ENCODE measurements at regions of chr13 and their contacts with region 1.

Region 1: DNA sequence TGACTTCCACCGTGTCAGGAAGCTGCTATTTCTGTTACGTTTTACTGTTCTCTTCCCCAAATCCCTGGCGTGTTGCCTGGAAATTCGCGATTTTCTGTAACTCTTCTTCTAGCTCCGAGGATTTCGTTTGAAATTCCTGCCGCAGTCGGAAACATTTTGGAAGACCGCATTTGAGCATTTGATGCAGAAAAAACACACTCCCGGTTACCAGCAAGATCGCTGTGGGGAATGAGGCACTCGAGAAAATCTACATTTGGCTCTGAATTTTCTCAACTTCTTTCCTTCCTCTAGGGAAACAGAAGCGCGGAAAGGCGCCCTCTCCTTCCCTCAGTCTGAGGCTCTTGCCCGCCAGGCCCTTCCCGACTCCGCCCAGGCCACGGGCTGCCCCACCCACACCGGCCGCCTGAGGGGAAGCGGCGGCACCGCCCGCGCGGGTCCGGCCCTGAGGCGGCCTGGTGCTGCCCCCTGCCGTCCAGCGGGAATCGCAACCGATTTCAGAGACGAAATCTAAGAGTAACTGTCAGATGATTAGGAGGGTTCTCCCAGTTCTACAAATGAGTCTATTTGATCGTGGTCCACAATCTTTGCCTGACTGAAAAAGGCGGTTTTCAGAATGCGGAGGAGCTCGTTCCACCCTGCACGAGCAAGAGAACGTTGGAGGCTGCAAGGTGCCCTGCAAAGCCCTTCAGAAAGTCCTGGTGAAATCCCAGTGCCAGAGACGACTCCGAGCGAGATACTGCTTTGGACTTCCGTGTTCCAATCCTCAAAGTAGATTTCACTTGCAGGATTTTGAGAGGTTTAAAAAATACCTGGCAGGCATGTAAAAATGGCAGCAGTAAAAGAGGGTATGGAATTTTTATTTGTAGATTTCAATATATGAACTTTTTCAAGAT is 18.4 kb upstream of the TUBGCP3 start:
- DNase-seq: peak; percentile 74
- H3K4me3 ChIP-seq: no peak overlapping the region
- H3K27ac ChIP-seq: no peak overlapping the region
- H3K4me1 ChIP-seq: peaks cover 3% of the 10 kb centered on the region
- CTCF ChIP-seq: peak; percentile 79

Region 2: DNA sequence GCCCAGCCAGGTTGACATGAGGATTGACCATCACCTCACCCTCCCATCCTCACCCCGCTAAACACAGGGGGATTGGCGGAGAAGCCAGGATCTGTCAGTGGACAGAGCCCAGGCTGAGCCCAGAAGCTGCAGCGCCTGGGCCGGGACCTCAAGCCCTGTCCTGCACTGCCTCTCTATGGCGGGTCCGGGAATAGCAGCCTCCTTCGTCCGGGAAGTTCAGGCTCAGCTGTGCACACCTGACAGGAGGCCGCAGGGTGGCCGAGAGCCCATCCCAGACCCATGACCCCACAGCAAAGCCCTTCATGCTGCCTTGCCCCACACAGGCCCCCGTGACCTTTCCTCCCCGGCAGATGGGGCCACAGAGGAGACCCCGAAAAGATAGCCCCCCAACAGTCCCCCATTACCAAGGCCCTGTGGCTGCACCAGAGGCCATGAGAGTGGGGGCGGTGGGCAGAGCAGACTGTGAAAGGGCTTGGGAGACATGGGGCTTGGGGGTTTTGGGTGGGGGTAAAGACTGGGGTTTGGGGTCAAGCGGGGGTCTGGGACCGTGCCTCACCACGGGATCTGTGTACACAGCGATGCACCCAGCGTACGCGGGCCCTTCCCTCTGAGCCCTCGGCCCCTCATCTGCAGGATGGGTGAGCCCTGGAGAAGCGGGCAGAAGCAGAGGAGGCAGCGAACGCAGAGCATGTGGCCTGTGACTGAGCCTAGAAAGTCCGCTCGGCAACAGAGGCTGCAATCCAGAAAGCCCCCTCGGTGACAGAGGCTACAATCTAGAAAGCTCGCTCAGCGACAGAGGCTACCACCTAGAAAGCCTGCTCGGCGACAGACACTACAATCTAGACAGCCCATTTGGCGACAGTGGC is 162.1 kb before region 1 on chr13:
- CTCF ChIA-PET with region 1: no interaction called
- POLR2A ChIA-PET with region 1: no interaction called
- intact Hi-C with region 1: loop called (anchors 1 kb)
- DNase-seq: peak; percentile 25
- H3K4me3 ChIP-seq: no peak overlapping the region
- H3K27ac ChIP-seq: no peak overlapping the region
- H3K4me1 ChIP-seq: no peaks in the 10 kb centered on the region
- CTCF ChIP-seq: peak; percentile 74

Region 3: DNA sequence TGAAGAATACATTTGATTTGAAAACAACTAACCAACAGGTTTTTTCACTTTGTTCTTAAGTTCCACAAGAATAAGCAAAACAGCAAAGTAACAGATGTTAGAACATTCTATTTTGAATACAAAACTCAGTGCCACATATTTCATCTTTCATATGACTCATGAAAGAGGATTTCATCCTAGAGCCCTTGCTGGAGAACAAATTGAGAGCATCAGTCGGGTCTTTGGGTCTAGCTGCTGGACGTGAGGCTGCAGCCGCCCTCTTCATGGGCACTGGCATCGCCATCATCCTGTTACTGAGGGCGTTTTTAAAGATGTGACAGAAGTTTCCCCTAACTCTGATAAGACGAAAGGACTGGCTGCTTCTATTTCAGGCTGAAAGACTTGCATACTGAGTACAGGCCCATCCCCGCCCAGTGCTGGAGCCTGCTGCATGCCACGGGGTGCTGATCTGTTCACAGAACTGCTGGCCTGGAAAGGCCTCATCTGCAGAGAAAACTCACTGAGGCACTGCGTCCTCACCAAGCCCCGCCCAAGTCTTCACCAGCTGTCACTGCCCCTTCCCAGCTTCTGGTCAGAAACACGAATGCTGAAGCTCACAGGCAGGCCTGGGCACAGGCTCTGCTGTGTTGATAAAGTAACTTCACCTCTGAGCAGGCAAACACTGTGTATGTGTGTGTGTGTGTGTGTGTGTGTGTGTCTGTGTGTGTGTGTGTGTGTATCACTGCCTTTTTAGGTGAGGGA is 119.8 kb before region 1 on chr13:
- CTCF ChIA-PET with region 1: no interaction called
- POLR2A ChIA-PET with region 1: no interaction called
- intact Hi-C with region 1: loop called (anchors 10 kb)
- DNase-seq: no peak
- H3K4me3 ChIP-seq: no peak overlapping the region
- H3K27ac ChIP-seq: no peak overlapping the region
- H3K4me1 ChIP-seq: no peaks in the 10 kb centered on the region
- CTCF ChIP-seq: no peak

Region 4: GRCh38 chr13:112587212-112587763 is 19.1 kb before region 1 on chr13:
- CTCF ChIA-PET with region 1: no interaction called
- POLR2A ChIA-PET with region 1: interaction called, 6 read pairs
- intact Hi-C with region 1: loop called (anchors 2 kb)
- DNase-seq: peak; percentile 53
- H3K4me3 ChIP-seq: peak overlapping the region; percentile 97
- H3K27ac ChIP-seq: peak overlapping the region; percentile 77
- H3K4me1 ChIP-seq: peaks cover 25% of the 10 kb centered on the region
- CTCF ChIP-seq: peak; percentile 41; the same call in 1 of the 2 replicates

Region 5: GRCh38 chr13:112704308-112705145 is 98.2 kb after region 1 on chr13:
- CTCF ChIA-PET with region 1: no interaction called
- POLR2A ChIA-PET with region 1: no interaction called
- intact Hi-C with region 1: no loop called
- DNase-seq: no peak
- H3K4me3 ChIP-seq: no peak overlapping the region
- H3K27ac ChIP-seq: no peak overlapping the region
- H3K4me1 ChIP-seq: no peaks in the 10 kb centered on the region
- CTCF ChIP-seq: no peak

Measured in OCI-LY7 (cell line).